Activated CD8-positive, alpha-beta T cell treated with anti-CD3 and anti-CD28 coated beads for 36 hours (primary cell): ENCODE measurements at regions of chr12 and their contacts with region 1.

Region 1: DNA sequence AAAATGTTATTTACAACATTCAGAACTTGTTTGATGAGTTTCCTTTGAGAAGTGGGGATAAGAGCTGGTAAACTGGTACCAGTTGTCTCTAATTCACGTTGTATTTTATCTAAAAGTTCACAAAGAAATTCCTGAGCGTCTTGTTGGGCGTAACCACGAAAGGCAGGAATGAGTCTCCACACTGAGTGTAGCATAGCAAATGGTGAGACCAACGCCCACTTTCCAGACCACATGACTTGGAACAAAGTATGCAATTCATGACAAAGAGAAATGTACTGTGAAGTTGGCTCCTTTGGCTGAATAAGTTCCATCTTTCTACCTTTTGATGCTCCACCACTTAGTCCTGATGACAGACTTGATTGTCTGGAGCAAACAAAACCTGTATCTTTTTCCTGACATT is 18.4 kb downstream of the USP44 start:
- DNase-seq: peak; percentile 25
- ATAC-seq: no peak
- H3K4me3 Mint-ChIP-seq: no peak overlapping the region
- H3K27ac Mint-ChIP-seq: no peak overlapping the region
- H3K4me1 Mint-ChIP-seq: peaks cover 13% of the 10 kb centered on the region
- H3K27me3 Mint-ChIP-seq: no peaks in the 10 kb centered on the region
- CTCF ChIP-seq: no peak

Region 2: GRCh38 chr12:95396849-95397468 is 135.9 kb before region 1 on chr12:
- CTCF ChIA-PET with region 1: no interaction called
- POLR2A ChIA-PET with region 1: no interaction called
- intact Hi-C with region 1: no loop called
- DNase-seq: no peak
- ATAC-seq: peak; percentile 27
- H3K4me3 Mint-ChIP-seq: no peak overlapping the region
- H3K27ac Mint-ChIP-seq: no peak overlapping the region
- H3K4me1 Mint-ChIP-seq: peaks cover 12% of the 10 kb centered on the region
- H3K27me3 Mint-ChIP-seq: peaks cover 11% of the 10 kb centered on the region
- CTCF ChIP-seq: no peak

Region 3: GRCh38 chr12:95516757-95517156 is 16.1 kb before region 1 on chr12:
- CTCF ChIA-PET with region 1: interaction called, 21 read pairs
- POLR2A ChIA-PET with region 1: no interaction called
- intact Hi-C with region 1: no loop called
- DNase-seq: no peak
- ATAC-seq: no peak
- H3K4me3 Mint-ChIP-seq: no peak overlapping the region
- H3K27ac Mint-ChIP-seq: peak overlapping the region; percentile 71
- H3K4me1 Mint-ChIP-seq: peaks cover 2% of the 10 kb centered on the region
- H3K27me3 Mint-ChIP-seq: no peaks in the 10 kb centered on the region
- CTCF ChIP-seq: no peak

Region 4: DNA sequence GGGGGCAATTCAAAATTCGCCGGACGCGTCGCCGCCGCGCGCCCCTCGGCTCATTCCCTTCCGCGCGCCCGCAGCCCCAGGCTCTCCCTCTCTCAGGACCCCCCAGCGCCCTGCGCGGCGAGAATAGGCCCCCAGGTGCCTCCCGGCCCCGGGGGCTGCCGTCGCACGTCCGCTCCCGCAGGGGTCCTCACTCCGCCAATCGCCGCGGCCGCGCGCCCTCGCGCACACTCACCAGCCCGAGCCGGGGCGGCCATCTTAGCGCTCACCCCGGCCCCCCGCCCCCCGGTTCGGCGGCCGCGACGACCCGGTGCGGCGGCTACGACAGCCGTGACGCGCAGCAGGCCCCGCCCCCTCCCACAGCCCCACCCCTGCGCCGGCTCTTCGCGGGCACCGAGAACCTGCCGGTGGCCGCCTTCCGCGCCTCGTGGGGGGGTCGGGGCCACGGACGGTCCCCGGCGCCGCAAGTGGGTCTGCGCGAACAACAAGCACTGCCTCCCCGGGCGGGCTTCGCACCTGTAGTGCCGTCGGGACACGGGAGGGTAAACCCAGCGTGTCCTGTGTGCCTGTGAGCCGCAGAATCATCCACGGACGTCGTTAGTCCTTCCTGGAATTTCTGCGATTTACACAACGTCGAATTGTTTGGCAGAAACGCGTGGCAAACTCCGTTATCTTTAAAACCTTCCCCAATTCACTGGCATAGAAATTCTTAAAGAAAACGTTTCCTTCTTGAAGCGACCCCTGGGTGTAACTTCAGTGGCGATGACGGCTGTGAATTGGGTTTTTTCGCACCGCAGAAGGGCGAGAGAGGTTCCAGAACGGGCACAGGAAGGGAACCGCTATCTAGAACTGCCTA is 15.9 kb after region 1 on chr12:
- CTCF ChIA-PET with region 1: interaction called, 15 read pairs
- POLR2A ChIA-PET with region 1: interaction called, 3 read pairs
- intact Hi-C with region 1: no loop called
- DNase-seq: peak; percentile 71
- ATAC-seq: peak; percentile 69
- H3K4me3 Mint-ChIP-seq: peak overlapping the region; percentile 82
- H3K27ac Mint-ChIP-seq: peak overlapping the region; percentile 78
- H3K4me1 Mint-ChIP-seq: peaks cover 42% of the 10 kb centered on the region
- H3K27me3 Mint-ChIP-seq: peaks cover 5% of the 10 kb centered on the region
- CTCF ChIP-seq: no peak

Region 5: GRCh38 chr12:95790033-95790911 is 257.4 kb after region 1 on chr12 and contains the start of gene NTN4:
- CTCF ChIA-PET with region 1: no interaction called
- POLR2A ChIA-PET with region 1: no interaction called
- intact Hi-C with region 1: no loop called
- DNase-seq: peak; percentile 33
- ATAC-seq: peak; percentile 67
- H3K4me3 Mint-ChIP-seq: peak within 1 kb of the TSS; percentile 67
- H3K27ac Mint-ChIP-seq: no peak within 1 kb of the TSS
- H3K4me1 Mint-ChIP-seq: peaks cover 14% of the 10 kb centered on the region
- H3K27me3 Mint-ChIP-seq: peaks cover 61% of the 10 kb centered on the region
- CTCF ChIP-seq: no peak
- total RNA-seq, gene NTN4: not detected